Ovary (tissue), 10 donors: ENCODE measurements at regions of chr2 and their contacts with region 1.

Region 1: GRCh38 chr2:34447097-34447496 is 848.0 kb upstream of the FAM98A start:
- DNase-seq: no peak
- H3K4me3 ChIP-seq: no peak overlapping the region
- H3K27ac ChIP-seq: no peak overlapping the region
- H3K4me1 ChIP-seq: no peaks in the 10 kb centered on the region
- H3K27me3 ChIP-seq: no peaks in the 10 kb centered on the region
- CTCF ChIP-seq: no peak
- EP300 ChIP-seq: no peak
- POLR2A ChIP-seq: no peak

Region 2: GRCh38 chr2:34229998-34230397 is 217.1 kb before region 1 on chr2:
- intact Hi-C with region 1: loop called in 1 of 4 experiments (anchors 5 kb)
- DNase-seq: no peak
- H3K4me3 ChIP-seq: no peak overlapping the region
- H3K27ac ChIP-seq: no peak overlapping the region
- H3K4me1 ChIP-seq: peaks cover 9% of the 10 kb centered on the region
- H3K27me3 ChIP-seq: no peaks in the 10 kb centered on the region
- CTCF ChIP-seq: no peak
- EP300 ChIP-seq: no peak
- POLR2A ChIP-seq: no peak

Region 3: DNA sequence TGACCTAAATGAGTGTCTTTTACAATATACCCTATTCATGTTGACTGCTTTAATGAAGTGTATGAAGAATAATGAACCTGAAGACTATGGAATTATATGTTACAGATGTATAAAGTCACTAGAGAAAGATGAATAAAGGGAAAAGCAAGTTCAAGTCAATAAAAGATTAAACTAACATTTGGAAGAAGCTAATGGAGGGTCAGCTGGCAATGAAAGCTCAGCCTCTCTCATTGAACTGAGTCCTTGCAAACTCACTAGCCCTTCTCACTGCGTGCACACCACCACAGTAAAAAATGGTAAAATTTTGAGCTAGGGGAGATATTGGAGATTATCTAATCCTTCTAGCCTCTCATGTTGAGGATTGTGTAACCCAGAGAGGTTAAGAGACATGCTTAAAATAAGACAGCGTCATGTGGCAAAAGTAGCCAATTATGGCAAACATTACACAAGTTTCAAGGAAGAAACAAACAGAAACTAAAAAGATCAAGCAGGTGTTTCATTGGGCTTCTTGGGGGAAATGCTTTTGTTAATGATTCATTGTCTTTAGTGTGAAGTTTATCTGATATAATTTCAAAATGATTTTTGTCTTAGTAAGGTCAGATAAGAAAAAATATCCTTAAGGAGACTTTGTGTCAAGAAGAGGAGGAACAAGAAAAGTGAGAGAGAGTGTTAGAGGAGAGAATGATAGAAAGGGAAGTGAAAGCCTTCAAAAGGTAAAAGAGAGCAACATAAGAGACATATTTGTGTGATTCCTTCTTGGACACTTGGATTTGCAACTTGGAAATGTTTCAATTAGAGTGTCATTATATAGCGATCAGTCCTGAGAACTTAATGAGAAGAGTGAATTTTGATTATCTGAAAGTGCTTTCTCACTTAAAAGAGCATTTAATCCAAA is 45.7 kb after region 1 on chr2:
- intact Hi-C with region 1: no loop called
- DNase-seq: no peak
- H3K4me3 ChIP-seq: no peak overlapping the region
- H3K27ac ChIP-seq: no peak overlapping the region
- H3K4me1 ChIP-seq: no peaks in the 10 kb centered on the region
- H3K27me3 ChIP-seq: no peaks in the 10 kb centered on the region
- CTCF ChIP-seq: no peak
- EP300 ChIP-seq: no peak
- POLR2A ChIP-seq: no peak